GM10248 (cell line): ENCODE measurements at regions of chr10 and their contacts with region 1.

Region 1: GRCh38 chr10:29409241-29410057 is 120.6 kb downstream of the LYZL1 start:
- DNase-seq: peak; percentile 67
- CTCF ChIP-seq: no peak

Region 2: GRCh38 chr10:29392376-29393021 is 16.9 kb before region 1 on chr10:
- CTCF ChIA-PET with region 1: interaction called, 35 read pairs
- POLR2A ChIA-PET with region 1: no interaction called
- DNase-seq: peak; percentile 52
- CTCF ChIP-seq: peak; percentile 56

Region 3: GRCh38 chr10:29420744-29421143 is 11.3 kb after region 1 on chr10:
- CTCF ChIA-PET with region 1: interaction called, 14 read pairs
- POLR2A ChIA-PET with region 1: interaction called, 4 read pairs
- DNase-seq: no peak
- CTCF ChIP-seq: no peak